GM10248 (cell line): ENCODE measurements at regions of chr15 and their contacts with region 1.

Region 1: DNA sequence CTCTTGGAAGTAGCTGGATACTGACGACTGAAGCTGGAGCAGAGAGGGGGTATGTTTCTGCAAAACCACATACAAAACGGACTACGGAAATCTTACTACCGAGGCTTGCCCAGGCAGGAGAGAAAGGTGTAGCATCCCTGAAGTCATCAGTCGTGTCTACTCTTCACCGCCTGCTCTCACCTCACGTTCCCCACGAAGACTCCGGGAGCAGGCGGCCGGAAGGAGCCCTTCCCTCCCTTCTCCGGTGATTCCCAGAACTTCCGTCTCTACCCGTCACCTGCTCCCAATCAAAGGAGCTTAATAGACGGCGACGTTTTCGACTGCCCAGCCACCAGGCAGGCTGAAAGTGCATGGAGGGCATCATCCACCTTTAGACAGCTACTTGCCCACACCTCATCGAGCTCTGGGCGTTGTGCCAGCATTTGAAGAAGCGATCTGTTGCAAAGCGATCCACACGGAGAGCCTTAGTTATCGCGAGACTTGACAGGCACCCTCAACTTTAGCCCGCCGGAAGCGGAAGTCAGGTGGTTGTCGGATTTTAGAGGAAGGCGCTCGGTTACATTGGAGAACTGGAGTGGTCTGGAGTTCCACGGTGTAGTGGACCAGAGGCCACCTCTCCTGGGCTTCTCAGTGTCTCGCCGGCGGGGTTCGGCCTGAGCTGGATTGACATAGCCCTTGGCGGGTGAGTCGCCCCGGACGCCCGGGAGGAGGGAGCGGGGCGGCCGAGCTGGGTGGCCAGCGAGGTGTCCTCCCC is at the start of gene RAMAC:
- DNase-seq: peak; percentile 91
- CTCF ChIP-seq: no peak

Region 2: DNA sequence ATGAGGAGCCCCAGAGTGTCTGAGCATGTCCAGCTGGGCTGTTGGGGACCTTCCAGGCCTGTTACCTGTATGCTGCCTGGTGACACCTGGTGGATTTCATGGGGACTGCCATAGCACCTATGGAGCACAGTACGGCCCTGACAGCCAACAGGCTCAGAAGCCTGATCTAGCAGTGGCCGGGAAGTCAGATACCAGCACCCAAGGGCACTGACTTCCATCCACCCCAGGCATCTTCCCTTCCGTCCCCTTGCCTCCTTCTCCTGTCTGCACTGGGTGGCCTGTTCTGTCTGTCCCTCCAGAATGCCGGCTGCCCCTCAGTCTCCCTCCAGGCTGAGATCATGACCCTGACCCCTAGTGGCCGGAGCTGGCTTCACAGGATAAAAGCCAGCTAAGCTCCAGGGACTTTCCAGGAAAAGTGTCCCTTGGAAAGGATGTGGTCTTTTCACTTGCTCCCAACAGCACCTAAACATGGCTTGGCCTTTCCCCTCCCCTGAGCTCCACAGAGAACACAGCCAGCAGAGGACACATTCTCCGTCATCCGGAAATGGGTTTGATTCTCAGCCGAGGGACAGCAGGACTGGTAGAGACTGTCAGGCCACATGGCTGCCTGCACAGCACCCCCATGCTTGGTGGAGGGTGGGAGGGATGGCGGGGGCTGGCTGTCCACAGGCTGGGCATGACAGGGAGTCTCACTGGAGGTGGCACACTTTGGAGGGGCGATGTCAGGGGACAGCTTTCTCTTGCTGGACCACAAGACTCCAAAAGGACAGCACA is 455.1 kb before region 1 on chr15:
- CTCF ChIA-PET with region 1: interaction called, 11 read pairs
- POLR2A ChIA-PET with region 1: no interaction called
- DNase-seq: peak; percentile 71
- CTCF ChIP-seq: peak; percentile 80

Region 3: DNA sequence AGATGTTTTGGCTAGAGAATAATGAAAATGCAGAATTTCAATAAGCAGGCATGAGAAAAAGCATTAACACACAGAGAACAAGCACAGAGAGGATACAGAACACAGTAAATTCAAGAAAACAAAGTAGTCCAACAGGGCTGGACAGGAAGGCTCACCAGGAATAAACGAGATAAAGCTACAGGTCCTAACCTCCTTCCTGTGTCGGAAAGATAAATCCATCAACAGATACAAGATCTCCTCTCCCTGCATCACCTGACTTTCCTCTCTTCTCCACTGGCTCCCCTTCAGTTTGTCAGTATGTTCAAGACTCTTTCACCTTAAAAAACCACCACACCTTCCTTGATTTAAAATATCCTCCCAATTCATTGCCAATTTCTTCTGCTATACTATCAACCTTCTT is 350.1 kb before region 1 on chr15:
- CTCF ChIA-PET with region 1: no interaction called
- POLR2A ChIA-PET with region 1: no interaction called
- DNase-seq: no peak
- CTCF ChIP-seq: no peak

Region 4: GRCh38 chr15:83011271-83012075 is 25.6 kb after region 1 on chr15 and contains the start of gene C15orf40:
- CTCF ChIA-PET with region 1: interaction called, 19 read pairs
- POLR2A ChIA-PET with region 1: no interaction called
- DNase-seq: peak; percentile 95
- CTCF ChIP-seq: peak; percentile 98